Activated CD4-positive, alpha-beta memory T cell treated with anti-CD3 and anti-CD28 coated beads for 36 hours (primary cell): ENCODE measurements at regions of chr11 and their contacts with region 1.

Region 1: GRCh38 chr11:2400069-2400760 is at the start of gene TSSC4:
- DNase-seq: peak; percentile 99
- H3K4me3 Mint-ChIP-seq: peak within 1 kb of the TSS; percentile 84
- H3K27ac Mint-ChIP-seq: peak within 1 kb of the TSS; percentile 82
- H3K4me1 Mint-ChIP-seq: peaks cover 15% of the 10 kb centered on the region
- H3K27me3 Mint-ChIP-seq: no peaks in the 10 kb centered on the region
- total RNA-seq, gene TSSC4: 33.8 to 40.2 TPM

Region 2: DNA sequence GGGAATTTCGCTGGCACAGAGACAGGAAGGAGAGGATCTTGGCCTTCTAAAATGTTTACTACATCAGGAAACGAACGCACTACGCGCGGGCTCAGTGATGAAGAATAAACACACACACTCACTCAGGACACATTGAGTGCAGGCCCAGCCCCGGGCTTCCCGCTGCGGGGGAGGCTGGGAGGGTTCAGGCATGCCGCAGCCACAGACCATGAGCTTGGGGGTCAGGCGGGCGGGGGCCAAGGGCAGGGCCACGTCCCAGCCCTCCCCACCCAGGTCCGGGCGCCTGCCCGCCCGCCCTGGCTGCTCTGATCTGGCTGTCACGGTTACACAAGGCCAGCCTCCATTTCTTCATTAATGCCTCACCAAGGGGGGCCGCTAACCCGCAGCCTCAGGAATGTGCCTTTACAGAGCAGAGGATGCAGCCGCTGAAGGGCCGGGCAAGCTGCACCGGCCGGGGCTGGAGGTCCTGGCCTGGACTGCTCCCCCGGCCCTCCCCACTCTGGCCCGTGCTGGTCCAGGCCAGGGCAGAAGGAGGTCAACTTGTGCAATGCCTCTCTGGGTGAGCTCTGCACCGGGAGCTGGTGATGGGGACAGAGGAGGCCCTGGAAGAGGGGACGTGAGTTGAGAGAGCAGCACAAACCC is 302.7 kb before region 1 on chr11:
- CTCF ChIA-PET with region 1: no interaction called
- POLR2A ChIA-PET with region 1: no interaction called
- intact Hi-C with region 1: no loop called
- DNase-seq: no peak
- H3K4me3 Mint-ChIP-seq: no peak overlapping the region
- H3K27ac Mint-ChIP-seq: no peak overlapping the region
- H3K4me1 Mint-ChIP-seq: peaks cover 9% of the 10 kb centered on the region
- H3K27me3 Mint-ChIP-seq: peaks cover 11% of the 10 kb centered on the region

Region 3: GRCh38 chr11:2269601-2270321 is 130.5 kb before region 1 on chr11:
- CTCF ChIA-PET with region 1: no interaction called
- POLR2A ChIA-PET with region 1: no interaction called
- intact Hi-C with region 1: loop called (anchors 1 kb)
- DNase-seq: peak; percentile 65
- H3K4me3 Mint-ChIP-seq: peak overlapping the region; percentile 52
- H3K27ac Mint-ChIP-seq: no peak overlapping the region
- H3K4me1 Mint-ChIP-seq: peaks cover 36% of the 10 kb centered on the region
- H3K27me3 Mint-ChIP-seq: peaks cover 38% of the 10 kb centered on the region

Region 4: GRCh38 chr11:2298795-2299761 is 101.1 kb before region 1 on chr11:
- CTCF ChIA-PET with region 1: interaction called, 18 read pairs
- POLR2A ChIA-PET with region 1: interaction called, 15 read pairs
- intact Hi-C with region 1: loop called (anchors 1 kb)
- DNase-seq: peak; percentile 43
- H3K4me3 Mint-ChIP-seq: no peak overlapping the region
- H3K27ac Mint-ChIP-seq: no peak overlapping the region
- H3K4me1 Mint-ChIP-seq: peaks cover 26% of the 10 kb centered on the region
- H3K27me3 Mint-ChIP-seq: no peaks in the 10 kb centered on the region

Region 5: DNA sequence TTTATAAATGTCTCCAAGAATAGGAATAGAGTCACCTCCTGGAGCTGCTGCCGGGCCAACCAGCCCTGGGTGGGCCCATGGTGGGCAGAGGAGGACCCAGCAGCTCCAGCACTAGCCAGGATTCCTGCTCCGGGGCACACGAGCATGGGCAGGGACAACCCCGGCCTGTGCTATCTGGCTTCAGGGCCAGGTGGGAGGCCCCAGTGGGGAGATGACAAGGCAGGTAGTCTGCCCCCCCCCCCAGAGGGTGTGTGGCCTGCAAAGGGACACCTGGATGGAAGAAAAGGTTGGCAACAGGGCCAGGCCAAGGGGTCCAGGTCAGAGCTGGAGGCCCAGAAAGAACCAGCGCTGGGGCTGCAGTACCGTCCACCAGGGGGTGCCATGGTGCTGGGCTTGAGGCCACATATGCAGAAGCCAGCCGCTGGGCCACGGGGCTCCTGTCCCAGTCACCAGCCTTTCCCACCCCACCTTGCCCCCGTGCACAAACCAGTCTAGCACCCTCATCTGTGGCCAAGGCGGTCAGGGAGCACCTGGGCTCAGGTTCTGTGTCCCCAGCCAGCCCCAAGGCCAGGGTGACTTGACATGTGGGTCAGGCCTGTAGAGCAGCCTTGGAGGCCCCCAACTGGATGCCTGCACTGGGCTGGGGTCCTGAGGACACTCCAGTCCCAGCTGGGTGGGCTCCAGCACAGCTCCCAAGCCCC is 94.9 kb before region 1 on chr11:
- CTCF ChIA-PET with region 1: interaction called, 18 read pairs
- POLR2A ChIA-PET with region 1: interaction called, 15 read pairs
- intact Hi-C with region 1: loop called (anchors 1 kb)
- DNase-seq: peak; percentile 88
- H3K4me3 Mint-ChIP-seq: no peak overlapping the region
- H3K27ac Mint-ChIP-seq: no peak overlapping the region
- H3K4me1 Mint-ChIP-seq: peaks cover 42% of the 10 kb centered on the region
- H3K27me3 Mint-ChIP-seq: no peaks in the 10 kb centered on the region

Region 6: DNA sequence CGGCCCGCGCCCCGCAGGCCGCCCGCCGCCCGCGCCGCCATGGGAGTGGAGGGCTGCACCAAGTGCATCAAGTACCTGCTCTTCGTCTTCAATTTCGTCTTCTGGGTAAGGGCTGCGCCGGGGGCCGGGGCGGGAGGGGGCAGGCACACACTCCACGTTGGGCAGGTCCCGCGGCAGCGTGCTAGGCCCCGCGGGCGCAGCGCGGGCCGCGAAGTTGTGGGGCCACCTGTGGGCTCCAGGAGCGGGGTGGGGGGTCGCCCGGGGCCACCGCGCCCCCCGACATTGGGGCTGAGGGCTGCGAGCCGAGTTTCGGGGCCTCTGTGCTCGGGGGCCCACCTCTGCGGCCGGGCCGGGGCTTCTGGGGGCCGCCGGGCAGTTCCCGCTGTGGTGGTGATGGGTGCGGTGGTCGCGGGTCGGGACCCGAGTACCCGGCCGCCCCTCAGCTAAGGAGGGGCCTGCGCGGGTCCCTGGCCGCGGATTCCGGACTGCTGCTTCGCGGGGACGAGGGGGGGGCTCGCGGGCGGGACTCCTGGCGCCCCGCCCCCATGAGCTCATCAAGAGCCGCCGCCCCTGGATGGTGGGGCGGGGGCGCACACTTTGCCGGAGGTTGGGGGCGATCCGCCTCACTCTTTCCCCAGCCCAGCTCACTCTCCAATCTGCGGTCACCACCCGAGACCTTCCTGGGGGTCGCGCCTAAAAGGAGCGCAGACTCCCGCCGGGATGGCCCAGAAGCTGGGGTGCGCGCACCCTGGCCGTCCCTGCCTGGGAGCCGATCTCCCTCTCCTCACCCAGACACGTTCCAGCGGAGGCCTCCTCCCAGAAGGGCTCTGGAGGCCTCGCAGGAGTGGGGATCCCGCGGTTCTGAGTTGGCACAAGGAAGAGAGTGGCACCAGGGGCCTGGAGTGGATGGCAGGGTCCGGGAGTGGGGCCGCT is 22.4 kb before region 1 on chr11:
- CTCF ChIA-PET with region 1: interaction called, 7 read pairs
- POLR2A ChIA-PET with region 1: interaction called, 17 read pairs
- intact Hi-C with region 1: loop called (anchors 1 kb)
- DNase-seq: peak; percentile 69
- H3K4me3 Mint-ChIP-seq: peak overlapping the region; percentile 89
- H3K27ac Mint-ChIP-seq: peak overlapping the region; percentile 84
- H3K4me1 Mint-ChIP-seq: peaks cover 24% of the 10 kb centered on the region
- H3K27me3 Mint-ChIP-seq: no peaks in the 10 kb centered on the region

Region 7: GRCh38 chr11:2387266-2387987 is 12.8 kb before region 1 on chr11:
- CTCF ChIA-PET with region 1: interaction called, 10 read pairs
- POLR2A ChIA-PET with region 1: interaction called, 5 read pairs
- intact Hi-C with region 1: no loop called
- DNase-seq: peak; percentile 43
- H3K4me3 Mint-ChIP-seq: no peak overlapping the region
- H3K27ac Mint-ChIP-seq: peak overlapping the region; percentile 34
- H3K4me1 Mint-ChIP-seq: peaks cover 38% of the 10 kb centered on the region
- H3K27me3 Mint-ChIP-seq: no peaks in the 10 kb centered on the region

Region 8: DNA sequence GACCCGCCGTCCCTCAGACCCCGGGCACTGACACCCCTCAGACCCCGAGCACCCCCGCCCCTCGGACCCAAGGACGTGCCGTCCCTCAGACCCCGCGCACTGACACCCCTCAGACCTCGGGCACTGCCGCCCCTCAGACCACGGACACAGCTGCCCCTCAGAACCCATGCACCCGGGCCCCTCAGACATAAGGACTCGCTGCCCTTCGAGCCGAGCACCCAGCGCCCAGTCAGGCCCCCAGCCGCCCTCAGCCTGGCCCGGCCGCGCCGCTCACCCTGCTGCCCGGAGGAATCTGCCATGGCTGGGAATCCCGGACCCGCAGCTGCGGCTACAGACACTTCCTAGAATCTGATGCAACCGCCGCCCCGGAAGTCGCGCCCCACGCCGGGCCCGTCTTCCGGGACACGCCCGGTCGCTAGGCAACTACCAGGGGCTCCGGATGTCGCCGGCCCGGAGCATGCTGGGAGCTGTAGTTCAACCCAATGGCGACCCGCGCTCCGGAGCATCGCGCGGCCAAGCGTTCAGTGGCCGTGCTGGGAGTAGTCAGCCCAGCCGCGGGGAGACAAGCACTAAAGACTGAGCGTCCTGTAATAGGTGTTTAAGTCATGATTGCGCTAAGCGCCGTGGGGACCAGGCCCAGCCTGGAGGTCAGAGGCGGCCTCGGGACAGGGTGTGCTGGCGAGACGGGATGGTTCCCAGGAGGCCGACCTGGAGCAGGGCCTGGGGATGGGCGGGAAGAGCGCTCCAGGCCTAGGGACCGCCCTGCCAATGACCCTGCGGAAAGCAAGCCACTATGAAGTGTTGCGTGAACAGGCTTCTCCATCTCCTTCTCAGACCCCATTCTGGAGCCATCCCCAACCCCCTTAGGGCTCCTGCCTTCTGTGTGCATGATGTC is 657.1 kb after region 1 on chr11 and contains the start of gene CARS1:
- CTCF ChIA-PET with region 1: no interaction called
- POLR2A ChIA-PET with region 1: no interaction called
- intact Hi-C with region 1: loop called (anchors 1 kb)
- DNase-seq: peak; percentile 97
- H3K4me3 Mint-ChIP-seq: peak within 1 kb of the TSS; percentile 89
- H3K27ac Mint-ChIP-seq: peak within 1 kb of the TSS; percentile 85
- H3K4me1 Mint-ChIP-seq: peaks cover 36% of the 10 kb centered on the region
- H3K27me3 Mint-ChIP-seq: no peaks in the 10 kb centered on the region
- total RNA-seq, gene CARS1: 94.7 to 97.5 TPM